WTC11 (cell line): ENCODE measurements at regions of chr12 and their contacts with region 1.

Region 1: GRCh38 chr12:77010691-77011548 is 54.4 kb downstream of the E2F7 start:
- DNase-seq: peak; percentile 83
- ATAC-seq: peak; percentile 88
- H3K4me3 Mint-ChIP-seq: peak overlapping the region; percentile 52
- H3K27ac Mint-ChIP-seq: no peak overlapping the region
- H3K4me1 Mint-ChIP-seq: peaks cover 6% of the 10 kb centered on the region
- H3K27me3 Mint-ChIP-seq: no peaks in the 10 kb centered on the region
- CTCF ChIP-seq: peak; percentile 85

Region 2: GRCh38 chr12:76621582-76622024 is 389.3 kb before region 1 on chr12:
- CTCF ChIA-PET with region 1: interaction called, 22 read pairs
- POLR2A ChIA-PET with region 1: no interaction called
- DNase-seq: peak; percentile 61
- ATAC-seq: peak; percentile 81
- H3K4me3 Mint-ChIP-seq: no peak overlapping the region
- H3K27ac Mint-ChIP-seq: no peak overlapping the region; the same call in 1 of the 2 replicates
- H3K4me1 Mint-ChIP-seq: peaks cover 8% of the 10 kb centered on the region; the same call in 1 of the 2 replicates
- H3K27me3 Mint-ChIP-seq: no peaks in the 10 kb centered on the region
- CTCF ChIP-seq: peak; percentile 71

Region 3: DNA sequence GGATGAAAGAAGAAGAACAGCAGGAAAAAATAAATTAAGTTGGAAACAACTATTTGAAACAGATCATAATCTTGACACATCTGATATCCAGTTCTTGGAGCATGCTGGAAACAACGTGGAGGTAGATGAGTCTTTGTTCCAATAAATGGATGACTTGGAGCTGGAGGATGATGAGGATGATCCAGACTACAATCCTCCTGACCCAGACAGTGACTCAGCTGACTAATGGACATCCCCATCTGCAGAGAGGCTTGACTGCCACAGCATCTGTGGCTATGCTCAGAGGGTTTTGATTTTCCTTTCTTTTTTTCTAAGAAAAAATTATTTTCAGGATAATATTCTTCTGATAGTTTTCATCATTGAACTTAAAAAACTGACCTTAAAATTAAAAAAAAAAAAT is 253.2 kb before region 1 on chr12:
- CTCF ChIA-PET with region 1: no interaction called
- POLR2A ChIA-PET with region 1: no interaction called
- DNase-seq: no peak
- ATAC-seq: no peak
- H3K4me3 Mint-ChIP-seq: no peak overlapping the region
- H3K27ac Mint-ChIP-seq: no peak overlapping the region
- H3K4me1 Mint-ChIP-seq: peaks cover 21% of the 10 kb centered on the region
- H3K27me3 Mint-ChIP-seq: no peaks in the 10 kb centered on the region
- CTCF ChIP-seq: no peak

Region 4: DNA sequence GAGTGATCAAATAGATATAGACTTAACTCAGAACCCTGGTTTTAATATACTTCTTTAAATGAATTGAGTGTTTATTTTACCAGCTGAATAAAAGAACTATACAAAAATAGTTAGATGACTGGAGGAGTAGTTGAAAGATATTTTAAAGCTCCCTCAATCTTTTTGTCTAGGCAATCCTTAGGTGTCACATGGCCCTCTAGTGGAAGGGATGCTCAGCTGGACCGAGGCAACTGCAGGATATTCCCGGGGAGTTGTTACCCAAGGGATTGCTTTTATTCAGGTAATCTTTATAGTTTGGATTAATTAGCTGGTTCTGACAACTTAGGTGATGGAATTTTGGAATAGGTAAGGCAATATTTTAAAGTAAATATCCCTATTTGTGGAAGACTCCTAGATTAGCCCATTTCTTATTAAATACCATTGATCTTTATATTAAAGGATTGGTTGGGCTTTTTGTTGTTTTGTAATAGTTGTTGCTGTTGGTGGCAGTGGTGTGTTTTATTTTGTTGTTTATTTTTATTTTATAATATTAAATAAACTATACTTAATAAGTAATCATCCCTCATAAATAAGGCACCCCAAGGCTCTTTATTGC is 189.9 kb before region 1 on chr12:
- CTCF ChIA-PET with region 1: interaction called, 24 read pairs
- POLR2A ChIA-PET with region 1: no interaction called
- DNase-seq: peak; percentile 49
- ATAC-seq: peak; percentile 62
- H3K4me3 Mint-ChIP-seq: no peak overlapping the region
- H3K27ac Mint-ChIP-seq: no peak overlapping the region
- H3K4me1 Mint-ChIP-seq: no peaks in the 10 kb centered on the region
- H3K27me3 Mint-ChIP-seq: no peaks in the 10 kb centered on the region
- CTCF ChIP-seq: no peak

Region 5: DNA sequence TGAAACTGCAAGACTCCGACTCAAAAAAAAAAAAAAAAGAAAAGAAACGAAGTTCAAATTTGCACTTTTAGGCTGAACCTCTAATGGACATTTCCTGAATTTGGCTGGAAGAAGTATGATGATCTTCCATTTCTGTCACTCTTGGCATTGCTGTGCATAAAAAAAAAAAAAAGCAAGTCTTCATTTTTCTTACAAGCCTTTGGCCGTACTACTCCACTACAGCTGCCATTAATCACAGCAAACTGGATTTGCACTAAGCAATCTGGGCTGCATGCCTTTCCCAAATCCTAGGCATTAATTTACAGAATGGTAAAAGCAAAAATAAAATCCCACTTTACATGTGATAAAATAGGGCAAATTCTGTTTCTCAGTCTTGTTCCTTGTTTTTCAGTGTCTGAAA is 139.2 kb before region 1 on chr12:
- CTCF ChIA-PET with region 1: interaction called, 35 read pairs
- POLR2A ChIA-PET with region 1: no interaction called
- DNase-seq: no peak
- ATAC-seq: no peak
- H3K4me3 Mint-ChIP-seq: peak overlapping the region; percentile 20; the same call in 1 of the 2 replicates
- H3K27ac Mint-ChIP-seq: peak overlapping the region; percentile 89
- H3K4me1 Mint-ChIP-seq: peaks cover 66% of the 10 kb centered on the region
- H3K27me3 Mint-ChIP-seq: no peaks in the 10 kb centered on the region
- CTCF ChIP-seq: no peak

Region 6: GRCh38 chr12:76908303-76909017 is 102.5 kb before region 1 on chr12:
- CTCF ChIA-PET with region 1: interaction called, 14 read pairs
- POLR2A ChIA-PET with region 1: no interaction called
- DNase-seq: no peak
- ATAC-seq: peak; percentile 42
- H3K4me3 Mint-ChIP-seq: no peak overlapping the region
- H3K27ac Mint-ChIP-seq: no peak overlapping the region; the same call in 1 of the 2 replicates
- H3K4me1 Mint-ChIP-seq: peaks cover 55% of the 10 kb centered on the region
- H3K27me3 Mint-ChIP-seq: no peaks in the 10 kb centered on the region
- CTCF ChIP-seq: no peak

Region 7: GRCh38 chr12:76943008-76943654 is 67.8 kb before region 1 on chr12:
- CTCF ChIA-PET with region 1: interaction called, 13 read pairs
- POLR2A ChIA-PET with region 1: no interaction called
- DNase-seq: no peak
- ATAC-seq: no peak
- H3K4me3 Mint-ChIP-seq: no peak overlapping the region
- H3K27ac Mint-ChIP-seq: no peak overlapping the region
- H3K4me1 Mint-ChIP-seq: peaks cover 8% of the 10 kb centered on the region
- H3K27me3 Mint-ChIP-seq: no peaks in the 10 kb centered on the region; the same call in 1 of the 2 replicates
- CTCF ChIP-seq: no peak

Region 8: GRCh38 chr12:76967181-76967885 is 43.6 kb before region 1 on chr12:
- CTCF ChIA-PET with region 1: interaction called, 22 read pairs
- POLR2A ChIA-PET with region 1: no interaction called
- DNase-seq: no peak
- ATAC-seq: peak; percentile 46
- H3K4me3 Mint-ChIP-seq: peak overlapping the region; percentile 14; the same call in 1 of the 2 replicates
- H3K27ac Mint-ChIP-seq: peak overlapping the region; percentile 77
- H3K4me1 Mint-ChIP-seq: peaks cover 56% of the 10 kb centered on the region
- H3K27me3 Mint-ChIP-seq: peaks cover 13% of the 10 kb centered on the region
- CTCF ChIP-seq: no peak

Region 9: DNA sequence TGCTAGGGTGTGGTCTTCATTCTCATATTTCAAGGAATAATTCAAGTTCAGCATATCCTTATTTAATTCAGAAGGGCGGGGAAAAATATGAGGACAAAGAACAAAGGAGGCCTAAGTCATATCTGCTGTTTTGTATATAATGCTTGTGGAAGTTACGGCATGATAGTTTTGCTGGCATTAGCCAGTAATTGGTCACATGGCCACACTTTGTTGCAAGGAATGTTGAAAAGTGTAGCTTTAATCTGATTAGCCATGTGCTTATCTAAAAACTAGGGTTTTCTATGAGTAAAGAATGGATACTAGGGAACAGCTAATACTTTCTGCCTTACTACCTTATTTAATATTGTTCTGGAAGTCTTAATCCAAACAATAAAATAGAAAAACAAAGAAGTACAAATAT is 88.9 kb after region 1 on chr12:
- CTCF ChIA-PET with region 1: no interaction called
- POLR2A ChIA-PET with region 1: no interaction called
- DNase-seq: no peak
- ATAC-seq: no peak
- H3K4me3 Mint-ChIP-seq: no peak overlapping the region
- H3K27ac Mint-ChIP-seq: no peak overlapping the region
- H3K4me1 Mint-ChIP-seq: peaks cover 7% of the 10 kb centered on the region; the same call in 1 of the 2 replicates
- H3K27me3 Mint-ChIP-seq: no peaks in the 10 kb centered on the region; the same call in 1 of the 2 replicates
- CTCF ChIP-seq: no peak